ENCODE measurements at regions of chr1 and their contacts with region 1.

Region 1: GRCh38 chr1:84930329-84930728 is 37.3 kb upstream of the LPAR3 start:
- DNase-seq: no peak
- H3K4me3 ChIP-seq: no peak overlapping the region
- H3K27ac ChIP-seq: no peak overlapping the region
- H3K4me1 ChIP-seq: no peaks in the 10 kb centered on the region
- H3K27me3 ChIP-seq: no peaks in the 10 kb centered on the region
- CTCF ChIP-seq: no peak

Region 2: DNA sequence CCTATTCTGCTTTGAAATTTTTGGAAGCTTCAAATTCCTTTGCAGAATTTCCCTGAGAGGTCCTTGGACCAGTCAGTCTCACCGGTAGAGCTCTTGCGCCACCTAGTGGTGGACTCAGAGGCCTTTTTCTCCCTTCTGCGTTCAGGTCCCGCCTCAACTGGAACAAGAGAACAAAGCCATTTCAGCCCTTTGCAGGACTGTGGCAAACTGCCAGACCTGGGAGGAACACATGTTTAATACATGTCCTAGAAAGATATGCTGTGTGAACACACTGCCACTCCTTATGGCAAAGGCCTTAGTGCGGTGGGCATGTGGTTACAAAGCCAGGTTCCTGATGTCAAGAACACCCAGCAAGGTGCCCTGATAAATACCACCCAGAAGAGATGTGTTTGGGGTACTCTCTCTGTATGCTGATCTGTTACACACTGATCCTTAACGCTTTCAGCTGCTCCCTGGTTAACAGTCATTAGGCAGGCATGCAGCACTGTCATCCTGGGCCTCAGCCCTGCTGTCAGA is 157.8 kb before region 1 on chr1:
- intact Hi-C with region 1: loop called (anchors 5 kb)
- DNase-seq: peak; percentile 88
- H3K4me3 ChIP-seq: no peak overlapping the region
- H3K27ac ChIP-seq: no peak overlapping the region
- H3K4me1 ChIP-seq: no peaks in the 10 kb centered on the region
- H3K27me3 ChIP-seq: no peaks in the 10 kb centered on the region
- CTCF ChIP-seq: peak; percentile 88

Region 3: DNA sequence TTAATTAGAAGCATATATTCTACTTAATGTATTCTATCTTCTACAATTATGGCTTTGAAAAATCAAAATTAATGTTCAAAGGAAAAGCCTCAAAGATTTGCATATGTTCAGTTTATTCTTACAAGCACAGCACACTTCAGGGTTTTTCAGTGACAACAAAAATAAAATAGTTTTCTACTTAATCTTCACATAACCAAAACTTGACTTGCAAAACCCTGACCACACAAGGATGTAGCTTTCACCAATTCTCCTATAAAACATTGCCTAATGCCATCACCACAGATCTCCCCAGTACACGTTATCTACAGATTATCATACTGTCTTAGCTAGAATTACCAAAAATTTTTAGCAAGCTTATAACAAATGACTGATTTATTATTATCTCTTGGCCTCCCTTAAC is 60.6 kb before region 1 on chr1:
- intact Hi-C with region 1: no loop called
- DNase-seq: no peak
- H3K4me3 ChIP-seq: no peak overlapping the region
- H3K27ac ChIP-seq: no peak overlapping the region
- H3K4me1 ChIP-seq: no peaks in the 10 kb centered on the region
- H3K27me3 ChIP-seq: no peaks in the 10 kb centered on the region
- CTCF ChIP-seq: no peak

Measured in colonic mucosa (tissue), 4 donors.